ENCODE measurements at regions of chr5 and their contacts with region 1.

Region 1: DNA sequence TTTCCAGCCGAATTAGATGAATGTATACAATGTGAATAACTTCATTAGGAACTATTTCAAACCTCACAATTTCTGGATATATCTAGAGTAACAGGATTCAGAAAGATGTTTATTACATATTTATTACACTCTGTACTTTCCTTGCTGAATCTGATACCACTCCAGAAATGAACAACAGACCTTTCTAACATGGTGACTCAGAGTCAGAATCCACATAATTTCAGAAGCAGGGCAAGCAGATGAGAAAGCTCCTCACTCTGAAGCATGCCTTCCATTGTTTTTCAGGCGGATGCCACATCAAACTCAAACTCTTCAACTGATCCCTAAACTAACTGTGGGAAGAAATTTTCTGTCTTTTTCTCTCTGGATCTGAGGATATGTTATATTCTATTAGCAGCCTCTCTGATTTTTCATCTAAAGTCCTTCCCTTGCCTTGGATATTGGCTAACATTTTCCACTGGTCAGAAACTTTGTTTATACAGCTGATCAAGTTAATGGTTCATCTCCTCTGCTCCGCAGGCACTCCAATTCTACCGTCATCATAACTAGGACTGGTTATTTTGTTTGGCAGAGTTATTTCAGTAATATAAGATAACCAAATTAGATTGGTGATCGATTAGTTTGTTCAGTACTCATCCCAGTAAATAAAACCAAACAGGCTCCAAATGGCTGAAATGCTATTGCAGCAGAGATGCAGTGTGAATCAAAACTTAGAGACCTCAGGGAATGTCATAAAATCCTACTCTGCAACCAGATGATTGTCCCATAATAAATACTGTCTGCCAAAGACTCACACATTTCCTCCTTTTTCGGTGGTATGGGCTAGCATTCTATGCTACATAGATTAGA is 556.0 kb downstream of the EBF1 start:
- DNase-seq: peak; percentile 18
- H3K4me3 Mint-ChIP-seq: no peak overlapping the region
- H3K27ac Mint-ChIP-seq: no peak overlapping the region
- H3K4me1 Mint-ChIP-seq: peaks cover 39% of the 10 kb centered on the region
- H3K27me3 Mint-ChIP-seq: no peaks in the 10 kb centered on the region

Region 2: DNA sequence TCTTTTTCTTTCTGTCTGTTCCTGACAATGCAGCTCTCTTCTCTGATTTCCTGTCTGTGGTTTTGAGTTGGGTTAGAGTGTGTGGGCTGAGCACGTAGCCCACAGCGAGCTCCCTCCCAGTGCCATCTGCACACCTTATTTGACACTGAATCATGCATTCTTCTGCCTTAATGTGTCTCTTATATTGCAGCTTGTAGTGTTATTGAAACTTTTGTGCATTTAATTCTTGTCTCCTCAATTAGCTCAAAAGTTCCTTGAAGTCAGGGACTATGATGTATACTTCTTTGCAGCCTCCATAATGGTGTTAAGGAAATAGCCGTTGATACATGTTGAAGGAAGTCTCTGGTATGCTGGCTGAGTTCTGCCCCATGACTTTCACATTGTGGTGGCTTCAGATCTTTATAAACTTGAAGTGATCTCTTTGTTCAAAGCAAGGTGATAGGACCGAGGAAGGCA is 108.6 kb before region 1 on chr5:
- CTCF ChIA-PET with region 1: no interaction called
- intact Hi-C with region 1: loop called (anchors 2 kb)
- DNase-seq: peak; percentile 50
- H3K4me3 Mint-ChIP-seq: no peak overlapping the region
- H3K27ac Mint-ChIP-seq: peak overlapping the region; percentile 57
- H3K4me1 Mint-ChIP-seq: peaks cover 62% of the 10 kb centered on the region
- H3K27me3 Mint-ChIP-seq: no peaks in the 10 kb centered on the region

Measured in activated naive CD4-positive, alpha-beta T cell treated with anti-CD3 and anti-CD28 coated beads for 36 hours (primary cell).